WTC11 (cell line): ENCODE measurements at regions of chr6 and their contacts with region 1.

Region 1: GRCh38 chr6:160137989-160138835 is 16.6 kb downstream of the SLC22A1 start:
- DNase-seq: peak; percentile 66
- ATAC-seq: peak; percentile 14; the same call in 1 of the 2 replicates
- H3K4me3 Mint-ChIP-seq: no peak overlapping the region
- H3K27ac Mint-ChIP-seq: no peak overlapping the region
- H3K4me1 Mint-ChIP-seq: peaks cover 28% of the 10 kb centered on the region
- H3K27me3 Mint-ChIP-seq: peaks cover 24% of the 10 kb centered on the region
- CTCF ChIP-seq: peak; percentile 64

Region 2: GRCh38 chr6:160160929-160161646 is 22.9 kb after region 1 on chr6:
- CTCF ChIA-PET with region 1: interaction called, 11 read pairs
- POLR2A ChIA-PET with region 1: no interaction called
- DNase-seq: no peak
- ATAC-seq: peak; percentile 25
- H3K4me3 Mint-ChIP-seq: no peak overlapping the region
- H3K27ac Mint-ChIP-seq: no peak overlapping the region
- H3K4me1 Mint-ChIP-seq: peaks cover 23% of the 10 kb centered on the region
- H3K27me3 Mint-ChIP-seq: no peaks in the 10 kb centered on the region; the same call in 1 of the 2 replicates
- CTCF ChIP-seq: no peak

Region 3: DNA sequence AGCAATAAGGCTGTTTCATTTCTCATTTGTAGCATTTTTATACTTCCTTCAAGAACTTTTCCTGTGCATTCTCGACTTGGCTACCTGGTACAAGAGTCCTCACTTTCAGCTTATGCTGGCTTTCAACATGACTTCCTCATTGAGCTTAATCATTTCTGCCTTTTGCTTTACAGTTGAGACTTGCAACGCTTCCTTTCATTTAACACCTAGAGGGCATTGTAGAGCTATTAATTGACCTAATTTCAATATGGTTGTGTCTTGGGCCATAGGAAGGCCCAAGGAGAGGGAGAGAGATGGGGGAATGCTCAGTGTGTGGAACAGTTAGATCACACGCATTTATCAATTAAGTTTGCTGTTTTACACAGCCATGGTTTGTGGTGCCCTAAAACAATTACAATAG is 83.2 kb after region 1 on chr6:
- CTCF ChIA-PET with region 1: interaction called, 27 read pairs
- POLR2A ChIA-PET with region 1: no interaction called
- DNase-seq: no peak
- ATAC-seq: peak; percentile 60
- H3K4me3 Mint-ChIP-seq: no peak overlapping the region
- H3K27ac Mint-ChIP-seq: peak overlapping the region; percentile 18; the same call in 1 of the 2 replicates
- H3K4me1 Mint-ChIP-seq: peaks cover 47% of the 10 kb centered on the region
- H3K27me3 Mint-ChIP-seq: no peaks in the 10 kb centered on the region; the same call in 1 of the 2 replicates
- CTCF ChIP-seq: no peak

Region 4: DNA sequence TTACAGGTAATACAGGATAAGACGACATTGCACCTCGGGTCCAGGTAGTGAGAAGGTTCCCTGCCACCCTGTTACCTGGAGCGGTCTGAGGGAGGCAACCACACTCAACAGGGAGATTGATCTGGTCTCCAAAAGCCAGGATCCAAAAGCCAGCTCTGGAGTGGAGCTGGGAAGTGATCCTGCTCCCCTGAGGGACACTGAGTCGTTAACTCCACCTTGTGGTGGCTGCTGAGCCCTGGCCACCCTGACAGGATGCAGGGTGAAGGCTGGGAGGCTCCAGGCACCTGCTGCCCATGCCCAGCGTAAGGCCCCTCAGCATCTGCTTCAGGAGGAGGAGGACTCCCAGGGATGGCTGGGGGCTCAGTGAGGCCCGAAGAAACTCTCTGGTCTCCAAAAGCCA is 159.1 kb after region 1 on chr6:
- CTCF ChIA-PET with region 1: interaction called, 18 read pairs
- POLR2A ChIA-PET with region 1: no interaction called
- DNase-seq: peak; percentile 54
- ATAC-seq: peak; percentile 85
- H3K4me3 Mint-ChIP-seq: no peak overlapping the region
- H3K27ac Mint-ChIP-seq: no peak overlapping the region
- H3K4me1 Mint-ChIP-seq: peaks cover 31% of the 10 kb centered on the region
- H3K27me3 Mint-ChIP-seq: no peaks in the 10 kb centered on the region; the same call in 1 of the 2 replicates
- CTCF ChIP-seq: no peak